B cell (primary cell): ENCODE measurements at regions of chr15 and their contacts with region 1.

Region 1: DNA sequence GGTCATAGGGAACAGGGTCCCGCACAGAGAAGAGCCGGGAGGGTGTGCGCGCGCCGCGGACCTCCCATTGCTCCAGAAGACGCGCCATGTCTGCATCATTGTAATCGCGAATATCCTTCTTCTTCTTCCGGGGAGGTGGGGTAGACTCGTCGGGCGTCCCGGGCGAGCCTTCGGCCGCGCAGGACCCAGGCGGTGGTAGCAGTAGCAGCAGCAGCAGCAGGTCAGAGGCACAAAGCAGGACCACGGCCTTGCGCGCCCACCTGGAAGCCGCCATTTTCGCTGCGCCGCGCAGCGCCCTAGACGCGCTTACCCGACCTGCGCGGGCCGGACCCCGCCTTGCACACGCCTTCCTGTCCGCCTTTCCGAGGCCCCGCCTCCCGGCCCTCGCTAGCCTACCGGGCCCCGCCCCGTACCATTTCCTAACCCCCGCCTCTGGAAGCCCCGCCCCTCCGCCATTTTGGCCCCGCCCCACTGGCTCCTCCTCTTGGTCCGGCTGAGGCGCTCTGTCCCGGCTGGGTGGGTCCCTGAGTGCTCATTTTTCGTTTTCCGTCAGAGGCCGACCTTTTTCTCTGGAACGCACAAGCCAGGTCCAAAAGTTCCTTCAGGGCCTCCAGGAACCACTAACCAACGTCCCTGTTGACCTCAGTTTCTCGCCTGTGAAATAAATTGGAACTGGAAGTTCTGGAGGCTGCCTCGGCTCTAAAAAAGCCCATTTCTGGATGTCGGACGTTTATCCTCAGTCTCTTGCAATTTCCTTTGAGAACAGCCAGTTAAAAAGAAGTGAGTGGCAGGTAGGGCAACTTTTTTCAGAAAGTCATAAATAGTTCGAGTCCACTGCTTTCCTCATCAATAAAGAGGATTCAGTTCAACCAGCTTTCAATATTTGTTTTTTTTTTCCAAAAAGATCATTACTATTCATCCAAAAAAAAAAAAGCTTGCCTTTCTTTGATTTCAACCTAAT is at the start of gene MESD:
- DNase-seq: peak; percentile 97
- ATAC-seq: peak; percentile 99
- H3K4me3 ChIP-seq: peak within 1 kb of the TSS; percentile 59 to 95 (median 91)
- H3K4me3 Mint-ChIP-seq: peak within 1 kb of the TSS; percentile 92
- H3K27ac ChIP-seq: peak within 1 kb of the TSS; percentile 82 to 87
- H3K27ac Mint-ChIP-seq: peak within 1 kb of the TSS; percentile 98
- H3K4me1 ChIP-seq: peaks cover 33 to 34% of the 10 kb centered on the region in 2 donors
- H3K4me1 Mint-ChIP-seq: peaks cover 49% of the 10 kb centered on the region
- H3K27me3 ChIP-seq: no peaks in the 10 kb centered on the region
- H3K27me3 Mint-ChIP-seq: no peaks in the 10 kb centered on the region
- CTCF ChIP-seq: no peak
- total RNA-seq, gene MESD: 35.3 TPM in 2 replicates

Region 2: DNA sequence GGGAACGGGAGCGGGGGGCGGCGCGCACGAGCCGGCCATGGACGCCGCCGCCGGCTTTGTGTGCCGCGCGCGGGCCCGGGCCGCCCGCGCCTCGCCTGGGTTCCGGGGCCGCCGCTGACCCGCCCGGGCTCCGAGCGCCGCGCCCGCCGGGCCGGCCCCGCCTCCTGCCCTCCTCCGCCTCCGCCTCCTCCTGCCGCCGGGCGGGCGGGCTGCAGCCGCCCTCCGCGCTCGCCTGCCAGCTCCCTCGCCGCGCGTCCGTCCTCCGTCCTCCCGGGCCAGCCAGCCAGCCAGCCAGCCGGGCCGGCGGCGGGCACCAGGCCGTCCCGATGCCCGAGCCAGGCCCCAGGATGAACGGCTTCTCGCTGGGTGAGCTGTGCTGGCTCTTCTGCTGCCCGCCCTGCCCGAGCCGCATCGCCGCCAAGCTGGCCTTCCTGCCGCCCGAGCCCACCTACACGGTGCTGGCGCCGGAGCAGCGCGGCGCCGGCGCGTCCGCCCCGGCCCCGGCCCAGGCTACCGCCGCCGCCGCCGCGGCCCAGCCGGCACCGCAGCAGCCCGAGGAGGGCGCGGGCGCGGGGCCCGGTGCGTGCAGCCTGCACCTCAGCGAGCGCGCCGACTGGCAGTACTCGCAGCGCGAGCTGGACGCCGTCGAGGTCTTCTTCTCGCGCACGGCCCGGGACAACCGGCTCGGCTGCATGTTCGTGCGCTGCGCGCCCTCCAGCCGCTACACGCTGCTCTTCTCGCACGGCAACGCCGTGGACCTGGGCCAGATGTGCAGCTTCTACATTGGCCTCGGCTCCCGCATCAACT is 294.5 kb before region 1 on chr15 and contains the start of gene ABHD17C:
- CTCF ChIA-PET with region 1: no interaction called
- POLR2A ChIA-PET with region 1: no interaction called
- intact Hi-C with region 1: loop called (anchors 10 kb)
- DNase-seq: peak; percentile 54
- ATAC-seq: peak; percentile 82
- H3K4me3 ChIP-seq: peak within 1 kb of the TSS; percentile 32 to 88 (median 58)
- H3K4me3 Mint-ChIP-seq: peak within 1 kb of the TSS; percentile 97
- H3K27ac ChIP-seq: peak within 1 kb of the TSS in 1 of 2 donors; percentile 50
- H3K27ac Mint-ChIP-seq: peak within 1 kb of the TSS; percentile 90
- H3K4me1 ChIP-seq: peaks cover 15 to 22% of the 10 kb centered on the region in 2 donors
- H3K4me1 Mint-ChIP-seq: peaks cover 20% of the 10 kb centered on the region
- H3K27me3 ChIP-seq: peaks cover 0 to 12% (median 3%) of the 10 kb centered on the region in 4 experiments
- H3K27me3 Mint-ChIP-seq: peaks cover 16% of the 10 kb centered on the region
- CTCF ChIP-seq: no peak
- total RNA-seq, gene ABHD17C: 1.9 and 2.8 TPM in 2 replicates

Region 3: GRCh38 chr15:81000624-81001151 is 10.9 kb after region 1 on chr15 and contains the start of gene TLNRD1:
- CTCF ChIA-PET with region 1: interaction called, 3 read pairs
- POLR2A ChIA-PET with region 1: interaction called, 15 read pairs
- intact Hi-C with region 1: loop called (anchors 1 kb)
- DNase-seq: peak; percentile 93
- ATAC-seq: peak; percentile 66
- H3K4me3 ChIP-seq: peak within 1 kb of the TSS; percentile 70 to 94 (median 77)
- H3K4me3 Mint-ChIP-seq: peak within 1 kb of the TSS; percentile 98
- H3K27ac ChIP-seq: peak within 1 kb of the TSS; percentile 81 to 94
- H3K27ac Mint-ChIP-seq: peak within 1 kb of the TSS; percentile 99
- H3K4me1 ChIP-seq: peaks cover 36 to 39% of the 10 kb centered on the region in 2 donors
- H3K4me1 Mint-ChIP-seq: peaks cover 44% of the 10 kb centered on the region
- H3K27me3 ChIP-seq: no peaks in the 10 kb centered on the region
- H3K27me3 Mint-ChIP-seq: no peaks in the 10 kb centered on the region
- CTCF ChIP-seq: no peak
- total RNA-seq, gene TLNRD1: 26.5 and 26.7 TPM in 2 replicates